ENCODE measurements at regions of chr11 and their contacts with region 1.

Region 1: DNA sequence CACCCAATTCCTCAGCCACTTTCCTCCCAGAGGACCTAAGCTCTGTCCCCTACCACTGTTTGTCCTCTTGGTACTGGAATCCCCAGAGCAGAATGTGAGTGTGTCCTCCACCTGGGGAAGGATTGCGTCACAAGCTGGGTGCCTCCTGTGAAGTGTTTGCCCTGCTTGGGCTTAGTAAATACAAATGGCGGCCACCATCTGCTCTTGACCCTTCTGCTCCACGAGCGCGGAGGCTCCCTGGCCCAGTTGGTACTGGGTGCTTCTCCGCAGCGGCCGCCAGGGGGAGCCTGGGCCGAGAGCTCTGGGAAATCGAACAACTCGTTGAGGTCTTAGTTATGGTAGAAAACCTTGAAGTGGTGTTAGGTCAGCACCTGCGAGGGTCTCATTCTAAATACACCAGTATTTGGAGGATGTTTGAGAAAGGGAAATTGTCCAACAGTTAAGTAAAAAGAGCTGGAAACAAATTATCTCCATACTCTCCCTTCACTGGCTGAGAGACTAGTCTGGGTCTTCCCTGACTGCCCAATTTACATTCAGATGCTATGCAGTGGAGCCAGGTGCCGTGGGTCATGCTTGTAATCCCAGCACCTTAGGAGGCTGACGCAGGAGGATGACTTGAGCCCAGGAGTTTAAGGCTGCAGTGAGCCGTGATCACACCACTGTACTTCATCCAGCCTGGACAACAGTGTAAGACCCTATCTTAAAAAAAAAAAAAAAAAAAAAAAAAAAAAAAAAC is 74.6 kb upstream of the TEAD1 start:
- DNase-seq: peak; percentile 22 to 76 (median 46)
- ATAC-seq: peak in 3 of 4 donors; percentile 33 to 76 (median 59)
- H3K4me3 ChIP-seq: no peak overlapping the region
- H3K27ac ChIP-seq: no peak overlapping the region
- H3K4me1 ChIP-seq: peaks cover 0 to 33% (median 15%) of the 10 kb centered on the region in 12 donors
- H3K27me3 ChIP-seq: no peaks in the 10 kb centered on the region
- CTCF ChIP-seq: peak; percentile 50 to 72 (median 62)
- POLR2A ChIP-seq: no peak

Region 2: DNA sequence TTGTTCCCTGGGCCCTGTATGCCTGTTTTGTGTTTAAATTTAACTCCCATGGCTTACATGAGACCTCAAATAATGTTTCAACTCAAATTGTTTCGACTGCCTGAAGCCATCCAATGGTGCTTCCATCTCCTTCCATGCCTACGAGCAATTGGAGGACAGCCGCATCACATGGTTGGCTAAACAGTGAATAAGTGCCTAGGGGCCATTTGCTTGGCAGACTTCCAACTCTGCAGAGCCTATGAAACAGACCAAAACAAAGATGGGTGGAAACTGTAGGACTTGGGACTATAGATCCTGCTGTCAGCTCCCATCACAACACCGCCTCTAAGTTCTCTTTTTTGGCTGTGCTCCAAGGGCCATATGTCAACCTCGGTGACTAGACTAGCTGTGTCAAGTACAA is 138.1 kb before region 1 on chr11:
- intact Hi-C with region 1: no loop called
- DNase-seq: no peak
- ATAC-seq: no peak
- H3K4me3 ChIP-seq: no peak overlapping the region
- H3K27ac ChIP-seq: peak overlapping the region in 1 of 12 donors; percentile 82
- H3K4me1 ChIP-seq: peaks cover 0 to 52% (median 30%) of the 10 kb centered on the region in 12 donors
- H3K27me3 ChIP-seq: no peaks in the 10 kb centered on the region
- CTCF ChIP-seq: no peak
- POLR2A ChIP-seq: no peak

Region 3: DNA sequence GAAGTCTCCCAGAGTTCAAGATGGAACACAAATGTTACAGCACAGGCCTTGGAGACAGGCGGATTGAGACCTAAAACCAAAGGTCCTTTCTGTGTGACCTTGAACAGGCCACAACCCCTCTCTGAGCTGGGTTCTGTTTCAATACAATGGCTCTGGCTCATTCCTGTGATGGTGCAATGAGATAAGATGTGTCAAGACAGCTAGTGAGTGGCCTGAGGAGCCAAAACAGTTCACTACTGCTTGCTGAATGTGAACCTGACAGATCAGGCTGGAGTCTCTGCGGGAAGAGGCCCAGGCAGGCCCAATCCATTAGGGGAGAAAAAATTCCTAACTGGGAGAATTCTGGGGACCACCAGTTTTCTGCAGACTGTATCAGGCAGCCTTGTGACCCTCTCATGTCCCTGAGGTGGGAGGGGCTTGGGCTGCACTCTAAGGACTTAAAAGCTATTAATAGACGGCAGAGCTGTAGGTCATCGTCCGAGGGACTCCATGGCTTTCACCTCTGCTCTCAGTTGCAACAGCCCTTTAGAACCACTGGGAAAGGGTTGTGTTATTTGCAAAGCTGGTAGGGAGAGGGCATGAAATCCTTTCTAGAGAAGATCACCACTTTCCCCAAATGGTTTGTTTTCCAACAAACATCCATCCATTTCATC is 51.5 kb before region 1 on chr11:
- intact Hi-C with region 1: loop called in 1 of 10 experiments (anchors 5 kb)
- DNase-seq: peak in 4 of 5 donors; percentile 33 to 68 (median 54)
- ATAC-seq: peak; percentile 69 to 86 (median 76)
- H3K4me3 ChIP-seq: no peak overlapping the region
- H3K27ac ChIP-seq: peak overlapping the region in 2 of 12 donors; percentile 2 to 53
- H3K4me1 ChIP-seq: peaks cover 0 to 24% (median 7%) of the 10 kb centered on the region in 12 donors
- H3K27me3 ChIP-seq: no peaks in the 10 kb centered on the region
- CTCF ChIP-seq: no peak
- POLR2A ChIP-seq: no peak

Region 4: GRCh38 chr11:12727563-12728214 is 128.1 kb after region 1 on chr11:
- intact Hi-C with region 1: no loop called
- DNase-seq: no peak
- ATAC-seq: peak in 1 of 4 donors; percentile 37
- H3K4me3 ChIP-seq: no peak overlapping the region
- H3K27ac ChIP-seq: peak overlapping the region in 1 of 12 donors; percentile 63
- H3K4me1 ChIP-seq: peaks cover 11 to 67% (median 51%) of the 10 kb centered on the region in 12 donors
- H3K27me3 ChIP-seq: no peaks in the 10 kb centered on the region
- CTCF ChIP-seq: no peak
- POLR2A ChIP-seq: no peak

Region 5: GRCh38 chr11:12813371-12814225 is 214.0 kb after region 1 on chr11:
- intact Hi-C with region 1: loop called in 1 of 10 experiments (anchors 10 kb)
- DNase-seq: peak in 3 of 5 donors; percentile 26 to 54 (median 53)
- ATAC-seq: peak in 3 of 4 donors; percentile 27 to 47 (median 39)
- H3K4me3 ChIP-seq: no peak overlapping the region
- H3K27ac ChIP-seq: peak overlapping the region in 10 of 12 donors; percentile 4 to 76 (median 47)
- H3K4me1 ChIP-seq: peaks cover 3 to 67% (median 49%) of the 10 kb centered on the region in 12 donors
- H3K27me3 ChIP-seq: no peaks in the 10 kb centered on the region
- CTCF ChIP-seq: no peak
- POLR2A ChIP-seq: no peak

Measured in heart left ventricle (tissue), 16 donors.